Sigmoid colon (tissue), 7 donors: ENCODE measurements at regions of chr1 and their contacts with region 1.

Region 1: GRCh38 chr1:153532769-153533599 is 2.8 kb downstream of the S100A6 start:
- DNase-seq: peak; percentile 96
- H3K4me3 ChIP-seq: peak overlapping the region; percentile 84 to 92 (median 91)
- H3K27ac ChIP-seq: peak overlapping the region; percentile 98 to 99 (median 99)
- H3K4me1 ChIP-seq: peaks cover 0 to 44% (median 38%) of the 10 kb centered on the region in 4 donors
- H3K27me3 ChIP-seq: no peaks in the 10 kb centered on the region
- CTCF ChIP-seq: peak; percentile 86 to 98 (median 92)
- EP300 ChIP-seq: peak in 1 of 4 donors; percentile 23
- POLR2A ChIP-seq: peak in 1 of 2 donors; percentile 42

Region 2: GRCh38 chr1:153510984-153511410 is 22.0 kb before region 1 on chr1:
- intact Hi-C with region 1: loop called (anchors 2 kb)
- DNase-seq: peak; percentile 88
- H3K4me3 ChIP-seq: no peak overlapping the region
- H3K27ac ChIP-seq: peak overlapping the region in 2 of 4 donors; percentile 4 to 38
- H3K4me1 ChIP-seq: peaks cover 0 to 31% (median 25%) of the 10 kb centered on the region in 4 donors
- H3K27me3 ChIP-seq: no peaks in the 10 kb centered on the region
- CTCF ChIP-seq: peak; percentile 80 to 91 (median 88)
- EP300 ChIP-seq: no peak
- POLR2A ChIP-seq: no peak

Region 3: GRCh38 chr1:153617675-153618074 is 84.7 kb after region 1 on chr1:
- intact Hi-C with region 1: loop called (anchors 5 kb)
- DNase-seq: peak; percentile 90
- H3K4me3 ChIP-seq: no peak overlapping the region
- H3K27ac ChIP-seq: peak overlapping the region in 3 of 4 donors; percentile 5 to 10 (median 7)
- H3K4me1 ChIP-seq: peaks cover 0 to 29% (median 17%) of the 10 kb centered on the region in 4 donors
- H3K27me3 ChIP-seq: no peaks in the 10 kb centered on the region
- CTCF ChIP-seq: peak in 2 of 4 experiments; percentile 31 to 39
- EP300 ChIP-seq: no peak
- POLR2A ChIP-seq: no peak

Region 4: DNA sequence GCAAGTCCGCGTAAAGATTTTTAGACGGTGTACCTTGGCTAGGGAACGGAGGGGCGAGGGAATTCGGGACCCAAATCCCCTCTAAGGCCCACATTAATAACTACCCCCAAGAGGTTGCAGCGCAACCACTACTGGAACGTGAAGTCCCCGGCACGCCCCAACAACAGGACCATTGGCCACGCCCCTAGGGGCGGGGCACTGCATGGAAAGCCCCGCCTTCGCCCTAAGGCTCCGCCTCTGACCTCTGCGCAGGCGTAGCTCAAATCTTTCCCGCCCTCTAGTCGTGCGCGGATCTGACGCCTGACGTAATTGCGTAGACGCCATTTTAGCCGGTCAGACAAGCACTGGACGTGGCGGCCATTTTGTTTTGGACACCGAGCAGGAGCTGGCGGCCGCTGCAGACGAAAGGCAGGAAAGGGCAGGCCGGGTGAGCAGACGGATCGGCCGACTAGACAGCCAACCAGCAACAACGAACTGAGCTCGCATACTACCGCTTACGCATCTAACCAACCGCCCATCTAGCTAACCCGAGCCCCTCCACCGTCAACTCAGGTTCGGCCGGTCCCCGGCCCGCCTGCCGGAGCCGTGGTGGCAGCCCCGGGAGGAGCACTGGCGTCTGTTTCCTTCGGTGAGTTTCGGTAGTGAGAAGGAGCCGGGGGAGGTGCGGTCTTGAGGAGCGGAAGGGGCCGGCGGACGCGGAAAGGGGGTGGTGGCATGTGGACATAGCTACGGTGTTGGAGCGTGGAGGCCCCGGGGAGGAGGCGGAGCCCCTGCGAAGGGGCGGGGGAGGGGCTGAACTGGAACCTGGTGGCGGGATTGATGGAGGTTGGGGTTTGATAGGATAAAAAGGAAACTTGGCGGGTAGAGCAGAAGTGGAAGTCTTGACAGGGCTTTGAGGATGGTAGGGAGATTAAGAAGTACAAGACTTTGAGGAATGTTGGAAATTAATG is 101.0 kb after region 1 on chr1 and contains the start of gene CHTOP:
- intact Hi-C with region 1: loop called (anchors 2 kb)
- DNase-seq: peak; percentile 99
- H3K4me3 ChIP-seq: peak within 1 kb of the TSS; percentile 72 to 92 (median 84)
- H3K27ac ChIP-seq: peak within 1 kb of the TSS; percentile 97 to 100 (median 98)
- H3K4me1 ChIP-seq: peaks cover 0 to 40% (median 32%) of the 10 kb centered on the region in 4 donors
- H3K27me3 ChIP-seq: no peaks in the 10 kb centered on the region
- CTCF ChIP-seq: no peak
- EP300 ChIP-seq: peak in 2 of 4 donors; percentile 11 to 28
- POLR2A ChIP-seq: peak; percentile 47 to 81
- total RNA-seq, gene CHTOP: 44.8 to 57.8 (median 50.2) TPM